PC-9 (cell line): ENCODE measurements at regions of chr2 and their contacts with region 1.

Region 1: GRCh38 chr2:167212014-167212648 is 323.9 kb downstream of the XIRP2 start:
- DNase-seq: peak; percentile 1 to 35
- H3K4me3 ChIP-seq: no peak overlapping the region
- H3K27ac ChIP-seq: no peak overlapping the region
- H3K4me1 ChIP-seq: no peaks in the 10 kb centered on the region
- H3K27me3 ChIP-seq: no peaks in the 10 kb centered on the region
- CTCF ChIP-seq: peak; percentile 76

Region 2: GRCh38 chr2:167127135-167127534 is 85.0 kb before region 1 on chr2:
- CTCF ChIA-PET with region 1: no interaction called
- POLR2A ChIA-PET with region 1: no interaction called
- intact Hi-C with region 1: loop called (anchors 1 kb)
- DNase-seq: no peak
- H3K4me3 ChIP-seq: no peak overlapping the region
- H3K27ac ChIP-seq: no peak overlapping the region
- H3K4me1 ChIP-seq: no peaks in the 10 kb centered on the region
- H3K27me3 ChIP-seq: no peaks in the 10 kb centered on the region
- CTCF ChIP-seq: peak; percentile 22; the same call in 1 of the 2 replicates